Adrenal gland (tissue), 19 donors: ENCODE measurements at regions of chr3 and their contacts with region 1.

Region 1: DNA sequence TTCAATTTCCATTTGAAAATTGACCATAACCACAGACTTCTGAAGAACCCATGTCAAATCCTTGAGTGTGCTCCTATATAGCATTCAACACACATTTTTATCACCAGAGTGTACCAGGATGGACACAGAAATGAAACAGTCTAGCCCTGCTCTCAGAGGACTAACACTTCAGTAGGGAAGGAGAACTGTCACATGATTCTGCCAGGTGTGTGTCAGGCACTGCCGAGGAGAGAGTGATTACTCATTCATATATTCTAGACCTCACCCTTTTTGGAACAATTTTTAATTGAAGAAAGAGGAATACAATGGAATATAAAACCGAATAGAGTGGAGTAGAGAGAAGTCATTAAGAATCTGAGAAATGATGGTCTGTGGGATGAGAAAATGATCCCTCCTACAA is 125.8 kb downstream of the ERC2 start:
- DNase-seq: no peak
- H3K4me3 ChIP-seq: no peak overlapping the region
- H3K27ac ChIP-seq: no peak overlapping the region
- H3K4me1 ChIP-seq: no peaks in the 10 kb centered on the region
- H3K27me3 ChIP-seq: no peaks in the 10 kb centered on the region
- CTCF ChIP-seq: no peak
- POLR2A ChIP-seq: no peak

Region 2: DNA sequence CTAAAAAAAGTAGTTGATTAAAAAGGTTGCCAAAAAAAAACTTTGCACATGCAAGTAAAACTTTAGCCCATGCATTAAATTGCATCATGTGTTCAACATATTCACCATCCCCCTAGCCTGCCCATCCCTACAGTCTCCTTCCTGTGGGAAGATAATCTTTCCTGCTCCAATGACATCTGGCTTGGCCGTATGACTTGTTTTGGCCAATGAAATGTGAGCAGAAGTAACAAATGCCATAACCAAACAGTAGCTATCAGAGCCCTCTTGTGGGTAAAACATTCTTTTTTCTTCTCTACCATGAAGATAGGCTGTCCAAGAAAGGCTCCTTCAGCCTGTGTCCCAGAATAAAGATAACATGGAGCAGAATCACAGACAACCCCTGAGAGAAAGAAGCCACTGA is 110.5 kb after region 1 on chr3:
- intact Hi-C with region 1: loop called in 1 of 2 experiments (anchors 5 kb)
- DNase-seq: no peak
- H3K4me3 ChIP-seq: no peak overlapping the region
- H3K27ac ChIP-seq: no peak overlapping the region
- H3K4me1 ChIP-seq: no peaks in the 10 kb centered on the region
- H3K27me3 ChIP-seq: no peaks in the 10 kb centered on the region
- CTCF ChIP-seq: no peak
- POLR2A ChIP-seq: no peak

Region 3: DNA sequence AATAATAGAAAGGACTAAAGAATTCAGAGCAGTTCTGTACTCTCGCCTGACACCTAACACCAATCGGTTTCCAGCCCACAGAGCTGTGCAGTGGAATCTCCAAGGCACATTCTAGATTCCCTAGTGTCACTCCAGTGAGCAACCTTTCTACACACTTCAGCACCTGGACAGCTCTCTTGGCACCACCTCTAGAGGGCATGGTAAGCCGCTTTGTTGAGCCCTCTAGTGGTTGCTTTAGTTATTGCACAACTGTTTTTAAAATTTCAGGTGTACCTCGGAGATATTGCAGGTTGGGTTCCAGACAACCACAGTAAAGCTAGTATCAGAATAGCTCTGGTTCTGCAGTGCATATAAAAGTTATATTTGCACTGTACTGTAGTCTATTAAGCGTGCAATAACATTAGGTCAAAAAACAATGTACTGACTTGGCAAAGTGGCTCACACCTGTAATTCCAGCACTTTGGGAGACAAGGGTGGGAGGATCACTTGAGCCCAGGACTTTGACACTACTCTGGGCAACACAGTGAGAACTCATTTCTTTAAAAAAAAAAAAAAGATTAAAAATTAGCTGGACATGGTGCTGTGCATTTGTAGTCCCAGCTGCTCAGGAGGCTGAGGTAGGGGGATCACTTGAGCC is 152.3 kb after region 1 on chr3:
- intact Hi-C with region 1: loop called in 1 of 2 experiments (anchors 5 kb)
- DNase-seq: peak; percentile 67 to 87 (median 85)
- H3K4me3 ChIP-seq: no peak overlapping the region
- H3K27ac ChIP-seq: no peak overlapping the region
- H3K4me1 ChIP-seq: no peaks in the 10 kb centered on the region
- H3K27me3 ChIP-seq: no peaks in the 10 kb centered on the region
- CTCF ChIP-seq: peak; percentile 82 to 92 (median 84)
- POLR2A ChIP-seq: no peak

Region 4: GRCh38 chr3:56725175-56725574 is 382.7 kb after region 1 on chr3:
- intact Hi-C with region 1: no loop called
- DNase-seq: no peak
- H3K4me3 ChIP-seq: no peak overlapping the region
- H3K27ac ChIP-seq: no peak overlapping the region
- H3K4me1 ChIP-seq: no peaks in the 10 kb centered on the region
- H3K27me3 ChIP-seq: no peaks in the 10 kb centered on the region
- CTCF ChIP-seq: no peak
- POLR2A ChIP-seq: no peak